ENCODE measurements at regions of chr4 and their contacts with region 1.

Region 1: DNA sequence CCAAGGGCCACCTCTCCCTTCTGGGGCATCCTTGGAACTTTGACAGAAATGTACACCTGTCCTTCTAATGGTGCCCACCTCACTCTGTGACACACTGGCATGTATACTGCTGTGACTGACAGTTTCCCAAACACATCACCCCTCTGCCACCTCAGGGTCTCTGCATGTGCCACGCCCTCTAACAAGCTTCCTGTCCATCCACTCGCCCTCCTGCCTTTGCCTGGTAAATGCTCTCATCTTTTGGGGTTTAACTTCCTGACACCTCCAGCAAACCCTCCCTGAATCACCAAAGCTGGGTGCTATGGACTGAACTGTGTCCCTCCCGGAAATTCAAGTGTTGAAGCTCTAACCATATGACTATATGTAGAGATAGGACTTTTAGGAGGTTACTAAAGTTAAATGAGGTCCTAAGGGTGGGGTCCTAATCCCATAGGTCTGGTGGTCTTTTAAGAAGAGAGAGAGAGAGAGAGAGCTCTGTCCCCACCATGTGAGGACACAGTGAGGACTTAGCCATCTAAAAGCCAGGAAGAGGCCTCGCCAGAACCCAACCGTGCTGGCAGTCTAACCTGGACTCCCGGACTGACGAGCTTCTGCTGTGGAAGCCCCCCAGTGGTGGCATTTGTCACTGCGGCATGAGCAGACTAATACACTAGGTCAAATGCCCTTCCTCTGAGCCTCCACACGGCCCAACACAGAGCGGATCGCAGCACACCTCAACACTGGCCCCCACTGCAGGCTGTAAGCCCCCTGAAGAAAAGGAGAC is 95.6 kb downstream of the AFAP1 start:
- DNase-seq: no peak

Region 2: DNA sequence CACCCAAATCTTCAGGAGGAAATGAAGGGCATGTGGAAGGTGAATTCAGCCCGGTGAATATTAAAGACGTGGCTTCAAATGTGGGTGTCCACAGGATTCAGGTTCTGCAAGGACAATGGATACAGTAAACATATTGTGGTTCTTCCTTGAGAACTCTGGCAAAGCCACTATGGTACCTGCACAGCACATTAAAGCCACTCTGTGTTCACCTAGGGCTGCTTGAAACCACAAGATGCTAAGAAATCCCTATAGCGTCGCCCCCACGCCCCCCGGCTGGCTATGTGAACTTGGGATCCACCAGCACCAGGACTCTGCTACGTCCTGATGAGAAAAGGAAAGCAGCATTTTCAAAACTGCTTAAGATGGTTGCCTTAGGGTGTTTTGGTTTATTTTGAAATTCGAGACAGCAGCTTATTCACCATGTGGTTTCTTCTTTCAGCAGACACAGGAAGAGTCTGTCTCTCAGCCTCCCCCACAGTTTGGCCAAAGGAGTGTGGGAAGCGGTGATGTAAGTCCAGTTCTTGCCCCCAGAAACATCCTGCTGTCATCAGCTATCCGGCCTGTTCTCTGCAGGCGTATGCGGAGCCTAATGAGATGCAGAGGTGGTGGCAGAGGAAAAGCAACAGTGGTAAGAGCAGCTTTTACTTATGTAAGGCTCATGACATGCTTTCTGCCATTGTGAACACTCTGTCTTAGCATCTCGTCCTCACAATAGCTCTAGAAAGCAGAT is 15.9 kb before region 1 on chr4:
- intact Hi-C with region 1: loop called (anchors 1 kb)
- DNase-seq: peak; percentile 84

Region 3: DNA sequence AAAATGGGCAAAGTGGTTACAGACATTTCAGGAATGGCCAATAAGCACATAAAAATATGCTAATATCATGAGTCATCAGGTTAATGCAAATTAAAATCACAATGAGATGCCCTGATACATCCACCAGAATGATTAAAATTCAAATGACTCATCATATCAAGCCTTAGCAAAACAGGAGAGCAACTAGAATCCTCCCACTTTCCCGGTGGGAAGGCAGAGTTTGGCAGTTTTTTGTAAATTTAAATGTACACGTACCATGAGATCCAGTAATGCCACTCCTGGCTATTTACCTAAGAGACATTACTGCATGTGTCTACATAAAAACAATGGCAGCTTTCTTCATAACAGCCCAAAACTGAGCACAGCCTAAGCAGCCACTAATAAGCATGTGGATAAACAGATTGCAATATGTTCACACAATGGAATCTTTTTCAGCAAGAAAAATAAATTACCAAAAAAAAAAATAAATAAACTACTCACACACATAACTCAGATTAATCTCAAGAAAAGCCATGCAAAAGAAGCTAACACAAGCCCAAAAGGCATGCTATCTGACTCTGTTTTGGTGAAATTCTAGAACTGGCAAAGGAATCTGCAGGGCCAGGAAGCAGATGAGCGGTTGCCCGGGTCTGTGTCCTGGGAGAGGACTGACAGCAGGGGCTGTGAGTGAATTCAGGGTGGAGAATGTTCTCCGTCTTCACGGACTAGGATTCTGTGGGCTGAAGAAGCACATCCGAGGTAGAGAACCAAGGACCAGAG is 46.8 kb after region 1 on chr4:
- intact Hi-C with region 1: loop called (anchors 5 kb)
- DNase-seq: no peak